Right ventricle myocardium inferior (tissue), 1 donor: ENCODE measurements at regions of chr14 and their contacts with region 1.

Region 1: DNA sequence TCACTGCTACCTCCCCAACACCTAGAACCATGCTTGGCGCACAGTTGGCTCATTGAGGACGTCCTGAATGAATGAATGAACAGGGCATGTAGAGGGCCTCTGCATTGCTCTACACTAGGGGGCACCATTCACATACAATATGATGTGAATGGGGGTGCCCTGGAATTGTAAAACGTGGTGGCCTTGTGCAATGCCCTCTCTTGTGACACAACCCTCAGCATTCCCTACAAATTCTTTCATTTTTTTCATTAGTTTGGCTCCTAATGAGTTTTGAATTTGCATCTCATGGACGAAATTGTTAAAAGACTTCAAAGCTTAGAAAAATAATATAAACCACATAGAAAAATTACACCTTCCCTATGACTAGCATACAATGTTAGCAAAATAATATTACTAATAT is 2.3 kb upstream of the DIO2 start:
- DNase-seq: no peak
- ATAC-seq: no peak

Region 2: GRCh38 chr14:80124794-80125193 is 88.8 kb before region 1 on chr14:
- intact Hi-C with region 1: no loop called
- DNase-seq: no peak
- ATAC-seq: no peak

Region 3: DNA sequence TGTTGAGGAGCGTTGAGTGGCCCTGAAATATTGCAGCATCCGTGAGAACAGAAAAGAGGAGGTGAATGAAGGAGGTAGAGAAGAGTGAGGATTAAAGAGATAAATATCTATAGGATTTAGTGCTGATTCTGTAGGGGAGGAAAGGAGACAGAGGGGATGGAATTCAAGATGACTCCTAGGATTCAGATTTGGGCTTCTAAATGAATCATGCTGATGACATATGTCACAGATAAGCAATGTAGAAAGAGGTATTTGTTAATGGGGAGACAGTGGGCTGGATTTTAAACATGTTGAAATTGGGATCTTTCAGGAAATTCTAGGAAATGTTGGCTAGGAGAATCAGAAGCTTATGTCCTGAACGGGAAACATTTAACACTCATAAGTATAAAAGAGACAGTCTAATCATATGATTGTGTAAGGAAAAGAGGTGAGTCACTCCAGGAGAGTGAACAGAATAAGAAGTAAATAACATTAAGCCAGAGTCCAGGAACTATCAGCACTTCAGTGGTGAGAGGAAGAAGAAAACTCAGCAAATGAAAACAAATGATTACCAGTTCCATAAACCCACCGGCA is 55.8 kb after region 1 on chr14:
- intact Hi-C with region 1: loop called (anchors 10 kb)
- DNase-seq: no peak
- ATAC-seq: no peak

Region 4: DNA sequence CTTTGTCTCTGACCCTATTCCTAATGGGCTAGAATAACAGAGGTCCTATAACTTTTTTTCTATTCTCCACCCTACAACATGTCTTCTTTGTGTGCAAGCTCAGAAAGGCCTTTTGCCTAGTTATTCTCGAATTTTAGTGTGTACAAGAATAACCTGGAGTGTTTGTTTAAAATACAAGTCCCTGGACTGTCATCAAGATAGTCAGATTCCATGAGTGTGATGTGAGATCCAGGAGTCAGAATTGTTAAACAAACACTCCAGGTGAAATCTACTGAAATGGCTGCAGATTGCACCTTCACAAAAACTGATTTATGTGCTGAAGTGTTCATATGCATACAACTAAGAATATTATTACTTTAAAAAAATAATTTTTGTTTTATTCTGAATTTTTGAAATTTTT is 112.1 kb after region 1 on chr14:
- intact Hi-C with region 1: no loop called
- DNase-seq: no peak
- ATAC-seq: no peak

Region 5: GRCh38 chr14:80346395-80346794 is 132.8 kb after region 1 on chr14:
- intact Hi-C with region 1: no loop called
- DNase-seq: no peak
- ATAC-seq: no peak

Region 6: DNA sequence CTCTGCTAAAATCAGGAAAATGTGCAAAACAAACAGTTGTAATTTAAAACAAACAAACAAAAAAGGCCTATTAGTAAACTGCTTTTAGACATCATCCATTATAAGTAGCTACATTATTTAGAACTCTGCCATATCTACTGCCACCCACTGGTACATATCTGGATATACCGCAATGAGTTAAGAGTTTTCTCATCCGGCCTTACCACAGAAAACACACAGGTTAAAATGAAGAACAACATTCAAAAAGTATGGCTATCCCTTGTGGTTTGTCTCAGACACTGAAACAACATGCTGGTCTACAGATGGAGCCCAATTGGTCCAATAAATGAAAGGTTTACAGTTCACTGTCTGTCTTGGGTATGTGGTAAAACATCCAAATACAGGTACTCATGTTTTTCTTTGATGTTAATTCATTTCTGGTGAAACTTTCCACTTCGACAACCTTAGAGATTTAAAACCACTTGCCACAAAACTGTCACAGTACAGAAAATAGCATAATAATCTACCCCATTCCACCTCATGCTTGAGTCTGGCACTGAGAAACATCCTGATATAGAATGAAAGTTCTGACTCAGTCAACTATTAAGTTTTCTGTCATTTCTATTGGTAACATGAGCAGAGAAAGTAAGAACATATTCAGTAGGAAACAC is 373.6 kb after region 1 on chr14:
- intact Hi-C with region 1: loop called (anchors 10 kb)
- DNase-seq: no peak
- ATAC-seq: no peak